H1 (cell line): ENCODE measurements at regions of chr2 and their contacts with region 1.

Region 1: DNA sequence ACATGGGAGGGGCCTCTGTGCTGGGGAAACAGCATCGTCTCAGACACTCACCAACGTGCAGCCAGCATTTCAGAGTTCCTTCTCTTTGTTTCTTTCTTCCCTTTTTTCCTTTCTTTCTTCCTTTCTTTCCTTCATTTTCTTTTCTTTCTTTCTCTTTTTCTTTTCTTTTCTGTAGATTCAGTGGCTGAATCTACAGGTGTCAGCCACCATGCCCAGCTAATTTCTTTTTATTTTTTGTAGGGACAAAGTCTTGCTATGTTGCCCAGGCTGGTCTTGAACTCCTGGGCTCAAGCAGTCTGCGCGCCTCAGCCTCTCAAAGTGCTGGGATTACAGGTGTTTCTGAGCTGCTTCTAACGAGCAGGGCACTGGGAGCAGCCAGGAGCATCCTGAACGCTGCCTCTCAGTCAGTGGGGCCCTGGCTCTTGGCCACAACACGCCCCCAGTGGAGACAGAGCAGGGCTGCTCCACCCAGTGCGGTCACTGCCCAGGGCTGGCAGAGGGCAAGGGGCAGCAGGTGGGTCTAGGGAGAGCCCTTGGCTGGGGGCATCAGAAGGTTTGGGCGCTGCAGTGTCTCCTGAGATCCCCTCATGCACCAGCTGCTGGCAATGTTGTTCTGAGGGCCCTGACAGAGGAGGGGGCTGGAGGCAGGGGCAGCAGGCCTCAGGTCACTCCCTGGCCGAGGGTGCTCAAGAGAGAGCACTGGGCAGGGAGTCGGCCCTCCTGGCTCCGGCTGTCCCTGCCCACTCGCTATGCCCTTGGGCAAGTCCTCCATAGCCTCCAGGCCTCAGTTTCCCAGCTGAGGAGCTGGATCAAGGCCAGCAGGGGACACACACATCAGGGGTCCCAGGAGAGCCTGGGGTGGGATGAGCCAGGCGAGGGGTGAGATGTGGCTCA is 4.7 kb upstream of the KLHL30 start:
- DNase-seq: no peak
- H3K4me3 ChIP-seq: no peak overlapping the region
- H3K27ac ChIP-seq: no peak overlapping the region
- H3K4me1 ChIP-seq: peaks cover 0 to 4% (median 0%) of the 10 kb centered on the region in 4 experiments; a peak in 2 of 7 replicates
- H3K27me3 ChIP-seq: no peaks in the 10 kb centered on the region
- CTCF ChIP-seq: peak in 2 of 3 experiments; percentile 33 to 36; a peak in 2 of 4 replicates
- EP300 ChIP-seq: no peak
- POLR2A ChIP-seq: no peak
- RAD21 ChIP-seq: peak in 1 of 2 experiments; percentile 37; a peak in 1 of 4 replicates

Region 2: GRCh38 chr2:238106686-238107524 is 26.8 kb before region 1 on chr2:
- CTCF ChIA-PET with region 1: interaction called, 24 read pairs
- POLR2A ChIA-PET with region 1: interaction called, 3 read pairs
- DNase-seq: peak in 1 of 2 experiments; percentile 75
- H3K4me3 ChIP-seq: no peak overlapping the region
- H3K27ac ChIP-seq: no peak overlapping the region
- H3K4me1 ChIP-seq: peaks cover 0 to 16% (median 7%) of the 10 kb centered on the region in 4 experiments; a peak in 6 of 7 replicates
- H3K27me3 ChIP-seq: no peaks in the 10 kb centered on the region; a peak in 1 of 7 replicates
- CTCF ChIP-seq: peak in 2 of 3 experiments; percentile 46 to 50; a peak in 2 of 4 replicates
- EP300 ChIP-seq: no peak
- POLR2A ChIP-seq: no peak
- RAD21 ChIP-seq: peak; percentile 66 to 67

Region 3: DNA sequence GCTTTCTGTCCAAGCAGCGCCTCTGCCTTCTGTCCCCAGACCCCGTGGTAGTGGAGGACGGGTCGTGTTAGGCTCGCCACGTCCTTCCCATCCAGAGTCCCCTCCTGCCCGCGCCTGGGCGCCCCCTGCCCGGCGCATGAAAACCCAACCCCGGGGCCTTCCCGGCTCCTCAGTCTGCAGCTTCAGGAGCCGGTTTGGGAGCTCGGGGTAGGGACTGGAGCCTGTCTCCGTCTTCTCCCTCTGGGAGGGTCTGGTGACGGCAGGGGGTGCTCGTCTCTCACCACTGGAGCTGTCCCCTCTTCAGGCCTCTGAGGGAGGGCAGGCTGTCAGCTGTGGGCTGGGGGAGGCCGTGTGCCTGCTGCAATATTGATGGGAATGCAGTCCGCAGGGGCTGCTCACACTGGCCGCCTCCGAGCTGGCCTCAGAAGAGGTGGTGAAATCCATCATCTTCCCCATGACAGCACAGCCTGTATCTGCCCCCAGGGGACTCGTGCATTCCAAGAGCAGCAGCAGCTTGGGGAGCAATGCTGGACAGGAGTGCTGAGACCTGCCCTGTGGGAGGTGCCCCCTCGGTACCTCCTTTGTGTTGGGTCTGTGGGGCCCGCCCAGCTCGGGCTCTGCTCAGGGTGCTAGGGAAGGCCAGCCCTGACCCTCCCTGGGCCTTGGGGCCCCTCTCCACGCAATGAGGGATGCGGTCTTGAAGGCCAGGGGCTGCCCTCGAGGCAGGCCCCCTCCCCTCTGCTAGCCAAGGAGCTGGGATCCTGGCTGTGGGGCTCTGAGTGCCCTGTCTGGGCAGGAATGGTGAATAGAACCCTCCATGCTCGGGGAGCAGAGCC is 13.1 kb before region 1 on chr2:
- CTCF ChIA-PET with region 1: interaction called, 27 read pairs
- POLR2A ChIA-PET with region 1: interaction called, 3 read pairs
- DNase-seq: no peak
- H3K4me3 ChIP-seq: no peak overlapping the region
- H3K27ac ChIP-seq: no peak overlapping the region
- H3K4me1 ChIP-seq: peaks cover 0 to 6% (median 2%) of the 10 kb centered on the region in 4 experiments; a peak in 3 of 7 replicates
- H3K27me3 ChIP-seq: no peaks in the 10 kb centered on the region; a peak in 1 of 7 replicates
- CTCF ChIP-seq: peak in 2 of 3 experiments; percentile 11 to 21; a peak in 3 of 4 replicates
- EP300 ChIP-seq: no peak
- POLR2A ChIP-seq: no peak
- RAD21 ChIP-seq: peak; percentile 24 to 50; a peak in 3 of 4 replicates